ENCODE measurements at regions of chr12 and their contacts with region 1.

Region 1: DNA sequence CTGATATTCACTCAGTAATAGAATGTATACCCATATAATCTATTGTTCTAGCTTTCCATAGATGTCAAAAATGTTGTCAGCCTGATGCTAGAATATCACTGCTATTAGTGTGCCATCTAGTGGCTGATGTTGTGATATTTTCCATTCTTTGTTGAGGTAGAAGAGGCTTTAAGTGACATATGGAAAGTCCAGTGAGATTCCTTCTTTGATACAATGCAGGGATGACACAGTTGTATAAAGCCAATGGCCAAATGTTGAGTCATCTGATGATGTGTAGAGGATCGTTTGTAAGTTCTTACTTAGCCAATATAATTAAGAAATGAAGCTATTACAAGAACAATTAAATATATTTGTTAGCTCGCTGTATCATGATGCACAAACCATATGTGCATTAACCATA is 58.1 kb upstream of the PCED1B start:
- DNase-seq: peak; percentile 91
- H3K4me3 ChIP-seq: no peak overlapping the region
- H3K27ac ChIP-seq: no peak overlapping the region
- H3K4me1 ChIP-seq: peaks cover 20% of the 10 kb centered on the region
- H3K27me3 ChIP-seq: no peaks in the 10 kb centered on the region
- CTCF ChIP-seq: peak; percentile 32 to 38
- POLR2A ChIP-seq: no peak

Region 2: GRCh38 chr12:46071769-46072624 is 949.3 kb before region 1 on chr12:
- CTCF ChIA-PET with region 1: interaction called, 37 read pairs
- POLR2A ChIA-PET with region 1: no interaction called
- dilution Hi-C with region 1: no loop called
- intact Hi-C with region 1: loop called (anchors 1 kb)
- DNase-seq: peak; percentile 67
- H3K4me3 ChIP-seq: no peak overlapping the region
- H3K27ac ChIP-seq: no peak overlapping the region
- H3K4me1 ChIP-seq: no peaks in the 10 kb centered on the region
- H3K27me3 ChIP-seq: peaks cover 10 to 14% of the 10 kb centered on the region in 2 experiments
- CTCF ChIP-seq: peak; percentile 88 to 94
- POLR2A ChIP-seq: no peak

Region 3: DNA sequence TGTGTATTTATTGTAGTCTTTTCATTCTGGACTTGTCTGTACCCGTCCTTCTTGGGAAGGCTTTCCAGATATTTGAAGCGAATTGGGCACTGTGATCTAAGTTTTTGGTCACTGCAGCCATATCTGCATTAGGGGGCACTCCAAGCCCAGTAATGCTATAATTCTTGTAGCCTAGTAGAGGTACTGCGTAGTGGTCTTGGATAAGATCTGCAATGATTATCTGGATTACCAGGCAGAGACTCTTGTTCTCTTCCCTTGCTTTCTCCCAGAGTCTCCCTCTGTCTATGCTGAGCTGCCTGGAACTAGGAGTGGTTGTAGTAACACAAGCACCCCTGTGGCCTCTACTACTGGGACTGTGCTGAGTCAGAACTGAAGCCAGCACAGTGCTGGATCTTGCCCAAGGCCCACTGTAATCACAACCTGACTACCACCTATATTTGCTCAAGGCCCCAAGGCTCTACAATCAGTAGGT is 678.7 kb before region 1 on chr12:
- CTCF ChIA-PET with region 1: interaction called, 14 read pairs
- POLR2A ChIA-PET with region 1: no interaction called
- dilution Hi-C with region 1: no loop called
- intact Hi-C with region 1: loop called (anchors 1 kb)
- DNase-seq: peak; percentile 66
- H3K4me3 ChIP-seq: no peak overlapping the region
- H3K27ac ChIP-seq: no peak overlapping the region
- H3K4me1 ChIP-seq: no peaks in the 10 kb centered on the region
- H3K27me3 ChIP-seq: no peaks in the 10 kb centered on the region
- CTCF ChIP-seq: peak; percentile 49
- POLR2A ChIP-seq: no peak

Region 4: DNA sequence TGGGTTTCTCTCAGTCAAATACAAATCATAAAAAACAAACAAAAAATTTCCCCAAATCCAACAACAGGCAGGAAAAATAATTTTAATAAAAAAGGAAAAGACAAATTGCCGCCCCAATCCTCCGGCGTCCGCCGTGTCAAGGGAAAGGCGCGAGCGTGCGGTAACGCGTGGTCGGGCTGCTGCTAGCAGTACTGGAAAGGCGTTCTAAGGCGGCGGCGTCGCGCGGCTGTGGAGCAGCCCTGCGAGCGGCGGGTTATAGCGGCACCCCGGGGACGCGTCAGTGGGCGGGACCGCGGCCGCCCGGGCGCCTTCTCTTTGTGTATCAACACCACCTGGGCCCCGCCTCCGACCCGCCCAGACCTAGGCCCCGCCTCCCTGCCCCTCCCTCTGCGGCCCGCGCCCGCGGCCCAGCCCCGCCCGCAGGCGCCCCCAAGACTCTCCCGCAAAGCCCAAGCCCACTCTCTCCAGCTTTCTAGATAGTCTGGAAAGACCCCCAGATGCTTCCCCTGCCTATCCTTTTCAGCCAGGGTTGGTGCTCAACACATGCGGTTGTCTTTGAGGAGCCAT is 648.7 kb before region 1 on chr12 and contains the start of gene SLC38A2:
- CTCF ChIA-PET with region 1: interaction called, 4 read pairs
- POLR2A ChIA-PET with region 1: no interaction called
- dilution Hi-C with region 1: no loop called
- intact Hi-C with region 1: loop called (anchors 5 kb)
- DNase-seq: peak; percentile 93
- H3K4me3 ChIP-seq: peak within 1 kb of the TSS; percentile 90 to 98 (median 91)
- H3K27ac ChIP-seq: peak within 1 kb of the TSS; percentile 96
- H3K4me1 ChIP-seq: peaks cover 29% of the 10 kb centered on the region
- H3K27me3 ChIP-seq: no peaks in the 10 kb centered on the region
- CTCF ChIP-seq: no peak
- POLR2A ChIP-seq: peak; percentile 100
- total RNA-seq, gene SLC38A2: 427 and 459 TPM in 2 replicates

Region 5: GRCh38 chr12:46675736-46676135 is 345.6 kb before region 1 on chr12:
- CTCF ChIA-PET with region 1: interaction called, 37 read pairs
- POLR2A ChIA-PET with region 1: no interaction called
- dilution Hi-C with region 1: no loop called
- intact Hi-C with region 1: loop called (anchors 1 kb)
- DNase-seq: peak; percentile 54
- H3K4me3 ChIP-seq: no peak overlapping the region
- H3K27ac ChIP-seq: no peak overlapping the region
- H3K4me1 ChIP-seq: no peaks in the 10 kb centered on the region
- H3K27me3 ChIP-seq: no peaks in the 10 kb centered on the region
- CTCF ChIP-seq: peak; percentile 36 to 44
- POLR2A ChIP-seq: no peak

Region 6: DNA sequence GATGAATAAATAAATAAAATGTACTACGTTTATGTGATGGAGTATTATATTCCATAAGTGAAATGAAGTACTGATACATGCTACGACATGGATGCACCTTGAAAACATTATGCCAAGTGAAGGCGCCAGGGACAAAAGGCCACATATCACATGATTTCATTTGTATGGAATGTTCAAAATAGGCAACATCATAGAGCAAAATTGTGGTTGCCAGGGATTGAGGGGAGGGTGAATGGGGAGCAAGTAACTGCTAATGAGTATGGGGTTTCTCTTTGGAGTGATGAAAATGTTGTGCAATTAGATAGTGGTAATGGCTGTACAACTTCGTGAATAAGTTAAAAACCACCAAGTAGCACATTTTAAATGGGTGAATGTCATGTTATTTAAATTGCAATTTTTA is 328.3 kb before region 1 on chr12:
- CTCF ChIA-PET with region 1: no interaction called
- POLR2A ChIA-PET with region 1: no interaction called
- dilution Hi-C with region 1: no loop called
- intact Hi-C with region 1: no loop called
- DNase-seq: no peak
- H3K4me3 ChIP-seq: no peak overlapping the region
- H3K27ac ChIP-seq: no peak overlapping the region
- H3K4me1 ChIP-seq: no peaks in the 10 kb centered on the region
- H3K27me3 ChIP-seq: no peaks in the 10 kb centered on the region
- CTCF ChIP-seq: no peak
- POLR2A ChIP-seq: no peak

Region 7: DNA sequence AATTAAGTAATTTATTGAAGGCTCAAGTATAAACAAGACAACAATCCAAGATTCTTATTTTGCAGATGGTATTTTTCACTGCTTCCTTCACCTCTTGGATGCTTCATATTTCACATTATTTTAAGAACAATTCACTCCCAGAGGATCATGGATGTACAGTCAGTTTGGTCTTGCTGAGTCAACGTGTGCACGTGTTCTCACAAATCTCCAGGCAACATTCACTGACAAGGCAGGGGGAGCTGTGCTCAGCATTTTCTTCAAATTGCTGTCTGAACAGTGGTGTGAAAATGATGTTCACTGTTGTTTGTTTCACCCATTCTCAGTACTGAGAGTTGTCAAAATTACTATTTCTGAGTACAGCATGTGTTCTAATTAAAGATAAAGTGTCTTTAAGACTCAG is 77.2 kb before region 1 on chr12:
- CTCF ChIA-PET with region 1: interaction called, 5 read pairs
- POLR2A ChIA-PET with region 1: no interaction called
- dilution Hi-C with region 1: no loop called
- intact Hi-C with region 1: loop called (anchors 5 kb)
- DNase-seq: peak; percentile 37
- H3K4me3 ChIP-seq: no peak overlapping the region
- H3K27ac ChIP-seq: no peak overlapping the region
- H3K4me1 ChIP-seq: peaks cover 4% of the 10 kb centered on the region
- H3K27me3 ChIP-seq: no peaks in the 10 kb centered on the region
- CTCF ChIP-seq: peak in 1 of 2 donors; percentile 6
- POLR2A ChIP-seq: no peak

Region 8: DNA sequence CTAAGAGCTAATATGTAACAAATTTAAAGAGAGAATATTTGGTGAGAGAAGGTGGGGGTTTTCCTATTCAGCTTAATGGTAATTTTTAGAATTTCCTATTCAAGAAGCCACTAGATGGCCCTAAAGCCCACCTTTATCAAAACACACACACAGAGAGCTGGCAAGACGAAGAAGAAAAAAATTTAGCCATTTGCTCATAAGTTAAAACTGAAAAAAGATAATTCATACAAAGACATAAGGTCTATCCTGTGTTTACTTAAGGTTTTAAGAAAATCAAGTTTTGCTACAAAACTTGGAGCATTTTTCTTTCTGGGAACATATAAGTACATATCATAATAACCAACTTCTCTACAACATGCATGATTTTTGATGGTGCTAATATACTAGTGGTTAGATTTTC is 11.3 kb after region 1 on chr12:
- CTCF ChIA-PET with region 1: interaction called, 22 read pairs
- POLR2A ChIA-PET with region 1: no interaction called
- dilution Hi-C with region 1: no loop called
- intact Hi-C with region 1: no loop called
- DNase-seq: peak; percentile 74
- H3K4me3 ChIP-seq: no peak overlapping the region
- H3K27ac ChIP-seq: no peak overlapping the region
- H3K4me1 ChIP-seq: no peaks in the 10 kb centered on the region
- H3K27me3 ChIP-seq: no peaks in the 10 kb centered on the region
- CTCF ChIP-seq: peak; percentile 17 to 25
- POLR2A ChIP-seq: no peak

Measured in endothelial cell of umbilical vein (primary cell).